Activated naive CD4-positive, alpha-beta T cell treated with anti-CD3 and anti-CD28 coated beads, Interleukin-2, amount 10 ng/mL, durations not matched to agents 7 days and 5 days (primary cell): ENCODE measurements at regions of chr2 and their contacts with region 1.

Region 1: GRCh38 chr2:206783718-206784117 is 18.3 kb downstream of the FASTKD2 start:
- DNase-seq: no peak
- H3K4me3 Mint-ChIP-seq: no peak overlapping the region
- H3K27ac Mint-ChIP-seq: no peak overlapping the region
- H3K4me1 Mint-ChIP-seq: no peaks in the 10 kb centered on the region
- H3K27me3 Mint-ChIP-seq: no peaks in the 10 kb centered on the region

Region 2: GRCh38 chr2:206693399-206694137 is 90.2 kb before region 1 on chr2:
- CTCF ChIA-PET with region 1: interaction called, 19 read pairs
- DNase-seq: peak; percentile 36
- H3K4me3 Mint-ChIP-seq: no peak overlapping the region
- H3K27ac Mint-ChIP-seq: no peak overlapping the region
- H3K4me1 Mint-ChIP-seq: peaks cover 3% of the 10 kb centered on the region
- H3K27me3 Mint-ChIP-seq: peaks cover 13% of the 10 kb centered on the region

Region 3: GRCh38 chr2:206721256-206721920 is 62.3 kb before region 1 on chr2:
- CTCF ChIA-PET with region 1: no interaction called
- DNase-seq: no peak
- H3K4me3 Mint-ChIP-seq: no peak overlapping the region
- H3K27ac Mint-ChIP-seq: no peak overlapping the region
- H3K4me1 Mint-ChIP-seq: no peaks in the 10 kb centered on the region
- H3K27me3 Mint-ChIP-seq: no peaks in the 10 kb centered on the region

Region 4: DNA sequence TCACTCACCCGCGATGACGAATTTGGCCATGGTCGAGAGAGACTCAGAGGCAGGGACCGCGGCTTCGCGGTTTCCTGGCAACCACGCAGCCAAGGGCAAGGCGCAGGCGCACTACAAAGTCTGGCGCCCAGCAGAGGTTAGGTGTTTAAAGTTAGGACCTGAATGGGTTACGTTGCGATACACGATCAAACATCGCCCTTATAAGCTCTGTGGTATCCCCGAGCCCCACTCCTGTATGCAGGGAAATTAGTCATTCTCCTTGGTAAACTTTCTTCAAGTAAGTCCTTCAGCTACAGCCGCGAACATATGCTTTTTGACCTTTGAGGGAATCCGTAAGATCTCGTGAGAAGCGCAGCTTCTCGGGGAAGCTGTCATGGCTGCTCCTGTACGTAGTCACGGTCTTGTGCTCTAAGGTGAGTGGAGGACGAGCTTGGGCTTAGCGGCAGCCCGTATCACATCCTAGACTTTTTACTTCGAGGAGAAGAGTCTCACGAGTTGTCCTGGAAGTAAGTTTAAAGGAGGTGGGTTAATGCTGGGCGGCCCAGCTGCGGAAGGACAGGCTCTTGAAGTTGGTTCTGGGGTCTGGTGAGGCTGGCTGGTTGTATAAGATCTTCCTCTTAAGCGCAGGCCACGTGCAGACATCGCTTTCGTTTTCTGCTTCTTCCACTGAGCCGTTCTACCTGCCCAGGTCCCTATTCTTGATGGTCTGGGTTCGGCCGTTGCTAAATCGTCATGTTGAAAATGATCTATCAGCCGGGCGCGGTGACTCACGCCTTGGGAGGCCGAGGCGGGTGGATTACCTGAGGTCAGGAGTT is 18.3 kb before region 1 on chr2 and contains the starts of genes FASTKD2 and MDH1B:
- CTCF ChIA-PET with region 1: interaction called, 11 read pairs
- DNase-seq: peak; percentile 87
- H3K4me3 Mint-ChIP-seq: peak within 1 kb of the TSS; percentile 89
- H3K27ac Mint-ChIP-seq: peak within 1 kb of the TSS; percentile 94
- H3K4me1 Mint-ChIP-seq: peaks cover 33% of the 10 kb centered on the region
- H3K27me3 Mint-ChIP-seq: peaks cover 6% of the 10 kb centered on the region